Transverse colon (tissue), 4 donors: ENCODE measurements at regions of chr1 and their contacts with region 1.

Region 1: DNA sequence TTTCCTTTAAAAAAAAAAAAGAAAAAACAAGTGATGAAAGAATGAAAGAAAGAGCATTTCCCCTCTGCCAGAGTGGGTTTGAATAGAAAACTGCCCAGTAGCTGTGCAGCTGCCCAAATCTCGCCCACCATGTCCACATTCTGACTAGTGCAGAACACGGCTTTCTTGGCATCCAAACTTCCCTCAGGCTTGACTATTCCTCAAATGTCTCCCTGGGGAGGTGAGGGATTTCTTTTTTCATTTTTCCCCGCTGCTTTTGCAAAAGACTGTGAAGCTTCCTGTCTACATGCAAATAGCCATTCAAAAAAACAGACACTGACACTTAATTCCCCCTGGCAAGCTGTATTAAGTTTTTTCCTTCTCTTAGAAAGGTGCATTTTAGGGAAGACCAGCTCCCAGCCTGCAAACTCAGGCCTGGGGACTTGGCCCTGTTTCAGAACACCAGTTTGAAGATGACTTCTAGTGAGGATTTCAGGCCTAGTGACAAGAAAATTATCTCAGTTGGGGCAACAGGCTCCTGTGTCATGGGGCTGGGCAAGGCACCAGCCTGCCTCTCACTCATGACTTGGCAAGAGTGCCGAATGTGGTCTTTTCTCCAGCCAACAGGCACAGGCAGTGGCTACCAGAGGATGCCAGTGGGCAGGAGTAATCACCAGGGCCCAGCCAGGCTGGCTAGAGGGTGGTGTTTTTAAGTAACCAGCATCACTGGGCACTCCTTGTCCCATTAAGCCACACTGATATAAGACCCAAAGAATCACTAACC is 178.1 kb upstream of the NFIA start:
- DNase-seq: no peak
- H3K4me3 ChIP-seq: no peak overlapping the region
- H3K27ac ChIP-seq: no peak overlapping the region
- H3K4me1 ChIP-seq: no peaks in the 10 kb centered on the region
- H3K27me3 ChIP-seq: no peaks in the 10 kb centered on the region
- CTCF ChIP-seq: no peak
- EP300 ChIP-seq: no peak
- POLR2A ChIP-seq: no peak

Region 2: DNA sequence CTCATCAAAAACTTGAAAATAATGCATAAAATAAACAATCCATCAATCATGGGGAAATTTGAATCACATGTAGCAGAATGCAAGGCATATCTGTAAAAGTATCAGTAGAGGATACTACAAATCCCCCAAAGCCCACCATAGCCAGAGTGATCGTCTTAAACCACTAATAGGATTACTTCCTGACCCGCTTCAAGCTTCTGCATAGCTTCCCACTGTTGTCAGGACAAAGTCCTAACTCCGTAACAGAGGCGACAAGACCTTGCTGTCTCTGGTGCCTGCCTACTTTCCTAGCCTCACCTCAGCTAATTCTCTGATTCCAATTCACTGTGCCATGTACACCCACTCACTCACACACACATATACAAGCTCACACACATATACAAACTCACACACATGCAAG is 16.9 kb after region 1 on chr1:
- in situ Hi-C with region 1: no loop called
- intact Hi-C with region 1: loop called (anchors 1 kb)
- DNase-seq: no peak
- H3K4me3 ChIP-seq: no peak overlapping the region
- H3K27ac ChIP-seq: no peak overlapping the region
- H3K4me1 ChIP-seq: peaks cover 0 to 25% (median 8%) of the 10 kb centered on the region in 4 donors
- H3K27me3 ChIP-seq: no peaks in the 10 kb centered on the region
- CTCF ChIP-seq: no peak
- EP300 ChIP-seq: no peak
- POLR2A ChIP-seq: no peak